K562 (cell line): ENCODE measurements at regions of chr22 and their contacts with region 1.

Region 1: GRCh38 chr22:41842996-41843970 is 10.4 kb downstream of the SREBF2 start:
- DNase-seq: no peak
- ATAC-seq: no peak
- H3K4me3 ChIP-seq: no peak overlapping the region
- H3K27ac ChIP-seq: no peak overlapping the region; the same call in 2 of the 3 replicates
- H3K4me1 ChIP-seq: peaks cover 18 to 72% of the 10 kb centered on the region in 2 experiments
- H3K27me3 ChIP-seq: no peaks in the 10 kb centered on the region
- CTCF ChIP-seq: no peak
- EP300 ChIP-seq: no peak
- POLR2A ChIP-seq: no peak
- RAD21 ChIP-seq: no peak

Region 2: GRCh38 chr22:41381329-41382097 is 461.8 kb before region 1 on chr22 and contains the start of gene TEF:
- CTCF ChIA-PET with region 1: no interaction called
- POLR2A ChIA-PET with region 1: no interaction called
- in situ Hi-C with region 1: no loop called
- intact Hi-C with region 1: no loop called
- DNase-seq: peak; percentile 95 to 98 (median 96)
- ATAC-seq: peak; percentile 94
- H3K4me3 ChIP-seq: peak within 1 kb of the TSS; percentile 86
- H3K27ac ChIP-seq: peak within 1 kb of the TSS; percentile 96
- H3K4me1 ChIP-seq: peaks cover 2 to 28% of the 10 kb centered on the region in 2 experiments; a peak in 4 of 5 replicates
- H3K27me3 ChIP-seq: no peaks in the 10 kb centered on the region
- CTCF ChIP-seq: no peak
- EP300 ChIP-seq: no peak
- POLR2A ChIP-seq: peak; percentile 55
- RAD21 ChIP-seq: no peak
- polyA plus RNA-seq, gene TEF: 0.04 to 0.06 TPM

Region 3: GRCh38 chr22:41832553-41833368 is 10.5 kb before region 1 on chr22 and contains the start of gene SREBF2:
- CTCF ChIA-PET with region 1: no interaction called
- POLR2A ChIA-PET with region 1: interaction called, 34 read pairs
- in situ Hi-C with region 1: no loop called
- intact Hi-C with region 1: no loop called
- DNase-seq: peak; percentile 91 to 98 (median 94)
- ATAC-seq: peak; percentile 94
- H3K4me3 ChIP-seq: peak within 1 kb of the TSS; percentile 66
- H3K27ac ChIP-seq: peak within 1 kb of the TSS; percentile 98
- H3K4me1 ChIP-seq: peaks cover 17 to 21% of the 10 kb centered on the region in 2 experiments; a peak in 4 of 5 replicates
- H3K27me3 ChIP-seq: no peaks in the 10 kb centered on the region
- CTCF ChIP-seq: no peak; a peak in 1 of 6 replicates
- EP300 ChIP-seq: peak; percentile 67
- POLR2A ChIP-seq: peak; percentile 63
- RAD21 ChIP-seq: 0 out of 4 replicates have a peak, but pooled peaks of 1 of the 2 experiments have one; percentile 4
- polyA plus RNA-seq, gene SREBF2: 1.1 TPM

Region 4: GRCh38 chr22:41857155-41857859 is 14.0 kb after region 1 on chr22:
- CTCF ChIA-PET with region 1: no interaction called
- POLR2A ChIA-PET with region 1: interaction called, 11 read pairs
- in situ Hi-C with region 1: no loop called
- intact Hi-C with region 1: no loop called
- DNase-seq: peak; percentile 63 to 79 (median 68)
- ATAC-seq: peak; percentile 87
- H3K4me3 ChIP-seq: no peak overlapping the region
- H3K27ac ChIP-seq: peak overlapping the region; percentile 4; the same call in 1 of the 3 replicates
- H3K4me1 ChIP-seq: peaks cover 8 to 12% of the 10 kb centered on the region in 2 experiments; a peak in 3 of 5 replicates
- H3K27me3 ChIP-seq: no peaks in the 10 kb centered on the region
- CTCF ChIP-seq: peak; percentile 57 to 61 (median 58)
- EP300 ChIP-seq: no peak
- POLR2A ChIP-seq: no peak
- RAD21 ChIP-seq: peak; percentile 44 to 72; a peak in 3 of 4 replicates